Calu3 (cell line): ENCODE measurements at regions of chr3 and their contacts with region 1.

Region 1: DNA sequence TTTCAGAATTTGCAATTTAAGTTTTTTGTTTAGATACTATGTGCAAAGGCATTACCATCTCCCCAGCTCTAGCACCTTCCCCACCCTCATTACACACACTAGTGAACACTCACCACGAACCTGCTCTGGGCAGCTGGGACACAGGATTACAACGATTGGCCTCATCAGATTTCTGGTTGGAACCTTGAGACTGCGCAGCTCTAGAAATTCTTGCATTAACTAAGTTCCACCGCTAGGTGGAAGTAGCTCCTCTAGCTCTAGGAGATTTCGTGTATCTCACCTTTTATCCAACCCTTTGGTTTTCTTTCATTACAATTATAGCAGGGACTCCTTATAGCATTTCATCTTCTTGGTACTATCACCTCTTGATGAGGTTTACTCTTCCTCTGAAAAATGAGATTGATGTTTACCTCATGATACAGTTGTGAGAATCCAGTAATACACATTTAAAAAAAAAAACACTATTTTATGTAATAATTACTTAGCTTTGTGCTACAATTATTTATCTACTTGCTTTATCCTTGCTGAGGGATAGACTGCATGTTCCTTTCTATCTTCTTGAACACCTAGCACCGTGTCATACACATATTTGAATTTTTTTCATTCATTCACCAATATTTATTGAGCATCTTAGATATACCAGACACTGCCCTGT is 28.7 kb upstream of the PLOD2 start:
- DNase-seq: peak; percentile 57
- H3K4me3 Mint-ChIP-seq: peak overlapping the region; percentile 26
- H3K27ac Mint-ChIP-seq: peak overlapping the region; percentile 66
- H3K4me1 Mint-ChIP-seq: peaks cover 14% of the 10 kb centered on the region
- H3K27me3 Mint-ChIP-seq: no peaks in the 10 kb centered on the region
- CTCF ChIP-seq: peak; percentile 81

Region 2: DNA sequence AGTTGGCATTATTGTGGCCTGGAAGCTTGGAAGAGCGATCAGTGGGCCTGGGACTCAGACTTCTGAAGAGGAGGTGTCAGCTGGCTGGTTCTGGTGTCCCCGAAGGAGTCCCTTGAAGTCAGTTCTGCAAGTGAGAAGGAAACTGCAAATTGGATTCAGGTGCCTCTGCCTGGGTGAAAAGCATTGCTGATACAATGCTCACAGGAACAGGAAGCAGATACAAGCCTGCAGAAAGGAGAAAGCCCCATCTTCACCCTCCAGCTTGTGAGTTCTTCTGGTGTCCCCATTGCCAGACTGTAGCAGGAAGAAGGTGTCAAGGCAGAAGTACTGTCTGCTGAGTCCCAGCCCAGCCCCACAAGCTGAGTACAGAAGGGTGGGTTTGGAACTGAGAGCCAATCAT is 299.9 kb before region 1 on chr3:
- CTCF ChIA-PET with region 1: no interaction called
- intact Hi-C with region 1: no loop called
- DNase-seq: no peak
- H3K4me3 Mint-ChIP-seq: no peak overlapping the region
- H3K27ac Mint-ChIP-seq: no peak overlapping the region
- H3K4me1 Mint-ChIP-seq: no peaks in the 10 kb centered on the region
- H3K27me3 Mint-ChIP-seq: no peaks in the 10 kb centered on the region
- CTCF ChIP-seq: no peak

Region 3: DNA sequence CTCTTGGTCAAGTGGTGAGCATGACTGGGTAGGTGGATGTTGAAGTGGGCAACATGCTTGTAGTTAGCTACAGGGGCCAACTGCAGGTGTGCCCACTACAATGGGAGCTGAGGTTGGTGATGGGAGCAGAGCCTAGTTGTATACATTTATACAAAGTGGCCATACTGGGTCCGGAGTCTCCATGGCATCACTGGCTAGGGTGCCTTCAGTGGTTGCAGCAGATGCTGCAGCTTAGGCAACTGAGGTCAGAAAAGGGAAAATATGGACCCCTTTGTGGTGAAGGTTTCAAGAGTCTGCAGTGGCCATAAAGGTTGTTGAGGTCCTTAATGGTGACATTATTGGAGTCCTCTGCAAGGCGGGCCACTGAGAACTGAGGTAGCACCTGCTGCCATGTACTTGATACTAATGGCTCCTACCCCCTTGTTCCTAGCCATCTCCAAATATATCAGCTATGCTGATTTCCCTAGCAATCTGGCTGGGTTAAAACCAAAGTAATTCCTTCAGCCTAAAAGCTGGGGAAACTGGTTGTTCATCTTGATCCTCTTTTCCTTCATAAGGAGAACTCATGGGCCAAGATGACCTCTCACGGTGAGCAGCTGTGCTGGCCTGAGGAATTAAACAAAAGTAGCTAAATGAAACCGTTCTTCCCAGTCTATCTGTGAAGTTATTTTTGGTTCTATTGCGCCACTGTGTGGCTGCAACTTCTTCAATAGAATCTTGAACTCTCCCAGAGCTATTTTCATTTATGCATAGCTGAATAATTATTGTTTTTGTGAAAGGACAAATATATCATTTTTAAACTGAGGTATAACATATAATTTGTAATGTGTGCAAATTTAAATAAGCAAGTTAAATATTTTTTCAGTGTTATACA is 137.3 kb after region 1 on chr3:
- CTCF ChIA-PET with region 1: interaction called, 114 read pairs
- intact Hi-C with region 1: loop called (anchors 1 kb)
- DNase-seq: peak; percentile 55
- H3K4me3 Mint-ChIP-seq: no peak overlapping the region
- H3K27ac Mint-ChIP-seq: no peak overlapping the region
- H3K4me1 Mint-ChIP-seq: no peaks in the 10 kb centered on the region
- H3K27me3 Mint-ChIP-seq: no peaks in the 10 kb centered on the region
- CTCF ChIP-seq: peak; percentile 60